A673 (cell line): ENCODE measurements at regions of chr10 and their contacts with region 1.

Region 1: GRCh38 chr10:44857363-44858016 is 53.6 kb upstream of the TMEM72 start:
- DNase-seq: peak; percentile 94
- H3K4me3 ChIP-seq: no peak overlapping the region
- H3K27ac ChIP-seq: no peak overlapping the region
- H3K4me1 ChIP-seq: no peaks in the 10 kb centered on the region
- H3K27me3 ChIP-seq: no peaks in the 10 kb centered on the region
- CTCF ChIP-seq: peak; percentile 98

Region 2: GRCh38 chr10:43671656-43672531 is 1185.6 kb before region 1 on chr10:
- CTCF ChIA-PET with region 1: no interaction called
- POLR2A ChIA-PET with region 1: no interaction called
- intact Hi-C with region 1: loop called (anchors 2 kb)
- DNase-seq: peak; percentile 56
- H3K4me3 ChIP-seq: no peak overlapping the region
- H3K27ac ChIP-seq: no peak overlapping the region
- H3K4me1 ChIP-seq: no peaks in the 10 kb centered on the region
- H3K27me3 ChIP-seq: peaks cover 4% of the 10 kb centered on the region
- CTCF ChIP-seq: peak; percentile 85

Region 3: DNA sequence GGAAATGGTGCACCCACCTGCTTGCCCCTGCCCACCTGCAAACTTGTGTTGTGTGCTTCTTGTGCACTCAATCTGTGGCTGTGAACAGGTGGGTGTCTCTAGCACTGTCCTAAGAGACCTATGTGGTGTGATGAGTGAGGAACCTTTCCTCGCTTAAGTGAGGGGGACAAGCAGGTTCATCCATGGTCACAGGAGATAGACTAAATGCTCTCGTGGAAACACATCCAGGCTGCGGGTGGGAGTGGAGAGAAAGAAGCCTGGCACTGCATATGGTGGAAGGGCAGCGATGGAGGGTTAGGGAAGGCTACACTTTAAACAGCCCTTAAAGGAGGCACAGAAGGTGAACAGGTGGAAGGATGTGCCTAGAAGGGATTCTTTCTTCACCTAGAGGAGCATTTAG is 803.4 kb before region 1 on chr10:
- CTCF ChIA-PET with region 1: no interaction called
- POLR2A ChIA-PET with region 1: interaction called, 11 read pairs
- intact Hi-C with region 1: no loop called
- DNase-seq: no peak
- H3K4me3 ChIP-seq: no peak overlapping the region
- H3K27ac ChIP-seq: no peak overlapping the region
- H3K4me1 ChIP-seq: no peaks in the 10 kb centered on the region
- H3K27me3 ChIP-seq: no peaks in the 10 kb centered on the region
- CTCF ChIP-seq: no peak

Region 4: GRCh38 chr10:44325157-44325556 is 532.3 kb before region 1 on chr10:
- CTCF ChIA-PET with region 1: no interaction called
- POLR2A ChIA-PET with region 1: no interaction called
- intact Hi-C with region 1: loop called (anchors 10 kb)
- DNase-seq: no peak
- H3K4me3 ChIP-seq: no peak overlapping the region
- H3K27ac ChIP-seq: no peak overlapping the region
- H3K4me1 ChIP-seq: no peaks in the 10 kb centered on the region
- H3K27me3 ChIP-seq: no peaks in the 10 kb centered on the region
- CTCF ChIP-seq: no peak

Region 5: GRCh38 chr10:44386546-44387052 is 470.9 kb before region 1 on chr10:
- CTCF ChIA-PET with region 1: interaction called, 3 read pairs
- POLR2A ChIA-PET with region 1: no interaction called
- intact Hi-C with region 1: loop called (anchors 5 kb)
- DNase-seq: peak; percentile 49
- H3K4me3 ChIP-seq: no peak overlapping the region
- H3K27ac ChIP-seq: no peak overlapping the region
- H3K4me1 ChIP-seq: no peaks in the 10 kb centered on the region
- H3K27me3 ChIP-seq: peaks cover 27% of the 10 kb centered on the region
- CTCF ChIP-seq: peak; percentile 80

Region 6: GRCh38 chr10:44437840-44438511 is 419.5 kb before region 1 on chr10:
- CTCF ChIA-PET with region 1: no interaction called
- POLR2A ChIA-PET with region 1: no interaction called
- intact Hi-C with region 1: no loop called
- DNase-seq: no peak
- H3K4me3 ChIP-seq: no peak overlapping the region
- H3K27ac ChIP-seq: no peak overlapping the region
- H3K4me1 ChIP-seq: no peaks in the 10 kb centered on the region
- H3K27me3 ChIP-seq: no peaks in the 10 kb centered on the region
- CTCF ChIP-seq: no peak